ENCODE measurements at regions of chr17 and their contacts with region 1.

Region 1: DNA sequence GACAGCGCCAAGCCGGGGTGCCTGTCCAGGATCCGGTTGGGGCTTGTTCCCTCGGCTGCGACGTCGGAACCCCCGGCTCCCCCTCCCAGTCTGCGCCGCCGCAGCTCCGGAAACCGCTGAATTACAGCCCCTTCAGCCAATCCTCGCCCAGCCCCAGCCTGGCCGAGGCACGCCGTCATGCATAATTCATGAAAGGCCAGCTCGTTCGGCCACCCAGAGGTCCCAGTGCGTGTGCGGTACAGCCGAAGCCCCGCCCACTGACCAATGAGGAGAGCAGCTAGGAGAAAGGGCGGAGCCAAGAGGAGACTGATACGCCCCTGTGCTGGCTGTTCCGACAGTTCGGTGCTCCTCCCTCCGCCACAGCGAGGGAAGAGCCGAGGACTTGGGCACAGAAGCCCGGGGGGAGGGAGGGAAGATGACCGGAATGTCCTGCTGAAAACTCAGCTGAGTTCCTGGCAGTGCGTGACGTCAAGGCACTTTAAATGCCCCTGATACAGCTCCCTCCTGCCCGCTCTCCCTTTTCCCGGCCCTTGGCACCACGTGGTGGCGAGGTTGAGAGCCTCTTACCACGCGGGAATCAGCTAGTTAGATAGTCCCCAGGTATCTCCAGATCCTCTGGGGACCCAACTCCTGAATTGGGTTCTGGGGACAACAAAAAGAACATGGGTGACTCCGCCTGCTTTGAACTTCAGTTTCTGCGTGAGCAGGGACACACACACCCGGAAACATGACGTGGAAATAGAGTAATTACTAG is at the start of gene STAT3:
- DNase-seq: peak; percentile 100
- H3K4me3 ChIP-seq: peak within 1 kb of the TSS; percentile 70 to 85 (median 78)
- H3K27ac ChIP-seq: peak within 1 kb of the TSS; percentile 69
- H3K4me1 ChIP-seq: peaks cover 16% of the 10 kb centered on the region
- H3K27me3 ChIP-seq: no peaks in the 10 kb centered on the region
- CTCF ChIP-seq: no peak
- total RNA-seq, gene STAT3: 94.3 to 191 TPM

Region 2: DNA sequence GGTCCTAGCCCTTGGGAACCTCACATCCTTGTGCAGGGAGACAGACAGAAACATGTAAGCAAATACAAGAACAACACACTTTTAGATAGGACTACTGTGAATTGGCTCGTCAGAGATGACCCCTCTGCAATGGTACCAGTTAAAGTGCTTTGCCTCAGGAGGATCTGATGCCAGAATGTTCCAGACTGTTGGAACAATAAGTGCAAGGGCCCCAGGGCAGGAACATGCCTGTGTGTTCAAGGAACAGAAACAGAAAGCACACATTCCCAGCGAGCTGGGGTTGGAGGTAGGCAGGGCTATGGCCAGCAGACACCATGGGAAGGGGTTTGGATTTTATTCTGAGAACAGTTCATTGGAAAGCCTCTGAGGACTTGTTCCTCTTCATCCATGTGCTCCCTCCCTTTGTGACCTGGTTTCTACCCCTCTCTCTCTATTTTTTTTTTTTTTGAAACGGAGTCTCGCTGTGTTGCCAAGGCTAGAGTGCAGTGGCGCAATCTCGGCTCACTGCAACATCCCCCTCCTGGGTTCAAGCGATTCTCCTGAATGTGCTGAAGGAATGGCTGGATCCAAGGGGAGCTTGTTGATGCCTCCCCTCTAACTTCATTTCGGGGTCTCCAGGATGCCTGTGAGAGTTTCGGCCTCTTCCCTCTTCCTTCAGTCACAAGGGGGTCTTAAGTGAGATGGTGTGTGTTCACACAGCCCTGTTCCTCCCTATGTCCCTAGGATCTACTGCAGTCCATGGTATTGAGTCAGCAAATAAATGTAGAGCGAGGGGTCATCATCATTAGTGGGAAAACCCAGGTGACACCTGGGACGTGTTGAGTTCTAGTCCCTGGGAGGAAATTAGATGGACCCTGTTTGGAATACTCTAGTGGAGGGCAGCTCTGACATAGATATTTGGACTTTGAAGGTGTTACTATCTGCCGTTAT is 93.8 kb before region 1 on chr17:
- CTCF ChIA-PET with region 1: no interaction called
- dilution Hi-C with region 1: no loop called
- in situ Hi-C with region 1: no loop called
- intact Hi-C with region 1: no loop called
- DNase-seq: no peak
- H3K4me3 ChIP-seq: no peak overlapping the region
- H3K27ac ChIP-seq: no peak overlapping the region
- H3K4me1 ChIP-seq: no peaks in the 10 kb centered on the region
- H3K27me3 ChIP-seq: no peaks in the 10 kb centered on the region
- CTCF ChIP-seq: no peak

Region 3: GRCh38 chr17:42322382-42323267 is 65.9 kb before region 1 on chr17:
- CTCF ChIA-PET with region 1: interaction called, 5 read pairs
- dilution Hi-C with region 1: no loop called
- in situ Hi-C with region 1: no loop called
- intact Hi-C with region 1: loop called (anchors 1 kb)
- DNase-seq: peak; percentile 78
- H3K4me3 ChIP-seq: no peak overlapping the region
- H3K27ac ChIP-seq: no peak overlapping the region
- H3K4me1 ChIP-seq: peaks cover 29% of the 10 kb centered on the region
- H3K27me3 ChIP-seq: no peaks in the 10 kb centered on the region
- CTCF ChIP-seq: peak; percentile 100

Region 4: GRCh38 chr17:42337442-42337841 is 51.1 kb before region 1 on chr17:
- CTCF ChIA-PET with region 1: no interaction called
- dilution Hi-C with region 1: loop called (anchors 5 kb)
- in situ Hi-C with region 1: no loop called
- intact Hi-C with region 1: no loop called
- DNase-seq: no peak
- H3K4me3 ChIP-seq: no peak overlapping the region
- H3K27ac ChIP-seq: no peak overlapping the region
- H3K4me1 ChIP-seq: no peaks in the 10 kb centered on the region
- H3K27me3 ChIP-seq: no peaks in the 10 kb centered on the region
- CTCF ChIP-seq: no peak

Region 5: DNA sequence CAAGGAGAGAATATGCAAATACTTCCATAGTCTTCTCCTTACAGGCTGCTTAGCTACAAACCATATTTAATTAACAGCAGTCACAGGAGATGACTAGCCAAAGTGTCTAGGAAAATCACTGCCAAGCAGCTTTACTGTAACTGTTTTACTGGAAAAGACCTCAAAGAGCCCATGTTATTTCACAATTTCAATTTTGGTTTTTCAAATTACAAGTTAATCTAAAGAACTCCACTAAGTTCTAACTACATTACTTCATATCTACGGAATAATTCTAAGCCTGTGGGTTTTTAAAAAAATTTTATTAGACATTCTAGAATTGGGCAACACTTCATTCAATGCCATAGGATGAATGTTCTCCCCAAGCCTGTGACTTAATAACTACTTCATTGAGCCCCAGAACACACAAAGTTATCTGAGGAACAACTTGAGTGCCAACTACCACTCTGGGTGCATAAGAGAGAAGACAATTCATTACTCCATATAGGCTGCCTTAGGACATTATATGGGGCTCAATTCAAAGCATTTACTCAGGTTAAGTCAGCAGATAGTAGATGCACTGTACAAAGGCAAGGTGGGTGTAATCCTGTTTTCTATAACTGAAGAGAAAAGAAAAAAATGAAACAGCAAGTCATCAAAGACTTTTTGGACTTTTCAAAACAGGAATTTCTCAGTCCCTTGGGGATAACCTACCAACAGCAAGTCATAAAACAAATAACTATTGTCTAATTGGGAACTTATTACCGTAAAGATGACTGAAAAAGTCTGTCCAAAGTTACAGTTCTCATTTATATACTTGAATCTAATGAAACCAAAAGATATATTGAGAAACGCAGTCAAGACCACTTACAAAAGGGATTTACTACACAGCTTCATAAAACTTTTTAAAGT is 33.4 kb before region 1 on chr17:
- CTCF ChIA-PET with region 1: no interaction called
- dilution Hi-C with region 1: no loop called
- in situ Hi-C with region 1: no loop called
- intact Hi-C with region 1: no loop called
- DNase-seq: peak; percentile 30
- H3K4me3 ChIP-seq: no peak overlapping the region
- H3K27ac ChIP-seq: no peak overlapping the region
- H3K4me1 ChIP-seq: no peaks in the 10 kb centered on the region
- H3K27me3 ChIP-seq: no peaks in the 10 kb centered on the region
- CTCF ChIP-seq: no peak

Region 6: DNA sequence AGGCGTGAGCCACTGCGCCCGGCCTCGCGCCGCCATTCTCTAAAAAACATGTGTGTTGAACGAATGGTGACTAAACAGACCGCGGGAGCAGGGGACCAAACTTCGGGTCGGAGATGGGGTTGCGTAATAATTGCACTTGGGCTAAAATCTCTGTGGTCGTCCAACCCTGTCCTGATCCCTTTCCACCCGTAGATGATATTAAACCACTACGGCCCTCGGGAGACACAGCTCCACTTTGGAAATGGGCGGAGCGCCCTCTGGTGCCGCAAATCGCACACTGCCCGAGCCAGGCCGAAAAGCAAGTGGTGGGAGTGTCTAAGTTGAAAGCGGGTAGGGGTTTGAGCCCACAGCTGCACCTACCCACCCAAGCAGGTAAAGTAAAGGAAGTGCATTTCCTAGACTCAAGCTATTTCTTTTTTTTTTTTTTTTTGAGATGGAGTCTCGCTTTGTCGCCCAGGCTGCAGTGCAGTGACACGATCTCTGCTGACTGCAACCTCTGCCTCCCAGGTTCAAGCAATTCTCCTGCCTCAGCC is 17.5 kb after region 1 on chr17:
- CTCF ChIA-PET with region 1: no interaction called
- dilution Hi-C with region 1: no loop called
- in situ Hi-C with region 1: no loop called
- intact Hi-C with region 1: loop called (anchors 1 kb)
- DNase-seq: peak; percentile 26
- H3K4me3 ChIP-seq: no peak overlapping the region
- H3K27ac ChIP-seq: no peak overlapping the region
- H3K4me1 ChIP-seq: peaks cover 50% of the 10 kb centered on the region
- H3K27me3 ChIP-seq: no peaks in the 10 kb centered on the region
- CTCF ChIP-seq: peak; percentile 45 to 76

Measured in mammary epithelial cell (primary cell).